ENCODE measurements at regions of chr16 and their contacts with region 1.

Region 1: GRCh38 chr16:57757326-57757786 is 21.8 kb downstream of the KATNB1 start:
- DNase-seq: peak; percentile 17
- H3K4me3 ChIP-seq: no peak overlapping the region
- CTCF ChIP-seq: peak; percentile 96

Region 2: GRCh38 chr16:57734925-57735754 is 22.2 kb before region 1 on chr16:
- CTCF ChIA-PET with region 1: interaction called, 27 read pairs
- POLR2A ChIA-PET with region 1: no interaction called
- DNase-seq: peak; percentile 100
- H3K4me3 ChIP-seq: peak overlapping the region; percentile 96
- CTCF ChIP-seq: no peak

Region 3: GRCh38 chr16:57770361-57770760 is 13.0 kb after region 1 on chr16:
- CTCF ChIA-PET with region 1: interaction called, 23 read pairs
- POLR2A ChIA-PET with region 1: no interaction called
- DNase-seq: no peak
- H3K4me3 ChIP-seq: no peak overlapping the region
- CTCF ChIP-seq: no peak

Region 4: GRCh38 chr16:57795431-57795878 is 38.1 kb after region 1 on chr16:
- CTCF ChIA-PET with region 1: interaction called, 12 read pairs
- POLR2A ChIA-PET with region 1: no interaction called
- DNase-seq: no peak
- H3K4me3 ChIP-seq: no peak overlapping the region
- CTCF ChIP-seq: peak; percentile 51

Region 5: GRCh38 chr16:57844416-57845030 is 87.2 kb after region 1 on chr16:
- CTCF ChIA-PET with region 1: no interaction called
- POLR2A ChIA-PET with region 1: no interaction called
- DNase-seq: no peak
- H3K4me3 ChIP-seq: no peak overlapping the region
- CTCF ChIP-seq: no peak

Region 6: GRCh38 chr16:58000706-58001676 is 243.6 kb after region 1 on chr16 and contains the start of gene USB1:
- CTCF ChIA-PET with region 1: interaction called, 10 read pairs
- POLR2A ChIA-PET with region 1: no interaction called
- DNase-seq: no peak
- H3K4me3 ChIP-seq: peak within 1 kb of the TSS; percentile 93
- CTCF ChIP-seq: peak; percentile 63

Measured in AG04449 (cell line).